ENCODE measurements at regions of chr21 and their contacts with region 1.

Region 1: DNA sequence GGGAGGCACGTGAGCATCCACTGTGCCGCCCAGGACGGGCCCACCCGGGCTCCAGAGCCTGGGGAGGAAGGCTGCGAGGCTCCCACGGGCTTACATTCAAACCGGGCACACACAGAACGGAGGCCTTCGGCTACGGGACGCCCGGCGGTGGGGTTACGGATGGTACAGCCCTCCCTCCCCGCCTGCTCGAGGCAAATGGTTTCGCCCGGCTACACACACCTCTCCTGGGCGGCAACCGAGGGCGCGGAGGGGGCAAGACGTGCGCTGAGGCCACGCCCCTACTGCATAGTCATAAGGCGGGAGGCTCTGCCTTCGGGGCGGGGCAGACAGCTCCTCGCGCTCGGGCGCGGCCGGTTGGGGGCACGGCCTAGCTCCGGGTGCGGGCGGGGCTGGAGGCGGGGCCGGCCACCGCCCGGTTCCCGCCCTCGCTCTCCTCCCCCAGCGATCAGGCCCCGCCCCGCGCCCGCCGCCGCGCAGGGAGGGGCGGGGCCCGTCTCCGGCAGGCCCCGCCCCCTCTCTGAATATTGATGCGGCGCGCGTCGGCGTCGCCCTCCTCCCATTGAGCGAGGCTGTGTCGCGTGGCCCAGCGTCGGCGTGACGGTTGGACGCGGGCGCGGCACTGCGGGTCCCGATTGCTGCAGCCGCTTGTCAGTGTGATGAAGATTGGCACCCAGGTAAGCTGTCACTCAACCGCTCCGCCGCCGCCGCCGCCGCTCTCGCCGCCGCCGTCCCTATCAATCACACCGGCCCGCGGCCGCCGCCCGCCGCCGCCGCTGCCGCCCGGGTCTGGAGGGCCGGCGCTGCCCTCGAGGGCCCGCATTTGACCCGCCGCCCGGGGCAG is at the start of gene PKNOX1:
- DNase-seq: peak; percentile 97 to 99
- ATAC-seq: peak; percentile 88
- H3K4me3 ChIP-seq: peak within 1 kb of the TSS; percentile 72 to 89 (median 86)
- H3K27ac ChIP-seq: peak within 1 kb of the TSS; percentile 97 to 100 (median 99)
- H3K4me1 ChIP-seq: peaks cover 21 to 24% of the 10 kb centered on the region in 2 donors
- H3K27me3 ChIP-seq: no peaks in the 10 kb centered on the region
- CTCF ChIP-seq: peak in 1 of 5 experiments; percentile 22
- POLR2A ChIP-seq: peak; percentile 80 to 83
- total RNA-seq, gene PKNOX1: 5.3 to 18.0 (median 7.6) TPM

Region 2: GRCh38 chr21:42878993-42879787 is 95.0 kb before region 1 on chr21 and contains the start of gene WDR4:
- in situ Hi-C with region 1: no loop called
- intact Hi-C with region 1: loop called (anchors 1 kb)
- DNase-seq: peak; percentile 95 to 97
- ATAC-seq: peak; percentile 97 to 99
- H3K4me3 ChIP-seq: peak within 1 kb of the TSS; percentile 86 to 94 (median 90)
- H3K27ac ChIP-seq: peak within 1 kb of the TSS; percentile 81 to 97 (median 90)
- H3K4me1 ChIP-seq: peaks cover 17% of the 10 kb centered on the region in 2 donors
- H3K27me3 ChIP-seq: no peaks in the 10 kb centered on the region
- CTCF ChIP-seq: no peak
- POLR2A ChIP-seq: peak; percentile 61 to 62
- total RNA-seq, gene WDR4: 1.9 to 13.3 (median 4.4) TPM

Region 3: DNA sequence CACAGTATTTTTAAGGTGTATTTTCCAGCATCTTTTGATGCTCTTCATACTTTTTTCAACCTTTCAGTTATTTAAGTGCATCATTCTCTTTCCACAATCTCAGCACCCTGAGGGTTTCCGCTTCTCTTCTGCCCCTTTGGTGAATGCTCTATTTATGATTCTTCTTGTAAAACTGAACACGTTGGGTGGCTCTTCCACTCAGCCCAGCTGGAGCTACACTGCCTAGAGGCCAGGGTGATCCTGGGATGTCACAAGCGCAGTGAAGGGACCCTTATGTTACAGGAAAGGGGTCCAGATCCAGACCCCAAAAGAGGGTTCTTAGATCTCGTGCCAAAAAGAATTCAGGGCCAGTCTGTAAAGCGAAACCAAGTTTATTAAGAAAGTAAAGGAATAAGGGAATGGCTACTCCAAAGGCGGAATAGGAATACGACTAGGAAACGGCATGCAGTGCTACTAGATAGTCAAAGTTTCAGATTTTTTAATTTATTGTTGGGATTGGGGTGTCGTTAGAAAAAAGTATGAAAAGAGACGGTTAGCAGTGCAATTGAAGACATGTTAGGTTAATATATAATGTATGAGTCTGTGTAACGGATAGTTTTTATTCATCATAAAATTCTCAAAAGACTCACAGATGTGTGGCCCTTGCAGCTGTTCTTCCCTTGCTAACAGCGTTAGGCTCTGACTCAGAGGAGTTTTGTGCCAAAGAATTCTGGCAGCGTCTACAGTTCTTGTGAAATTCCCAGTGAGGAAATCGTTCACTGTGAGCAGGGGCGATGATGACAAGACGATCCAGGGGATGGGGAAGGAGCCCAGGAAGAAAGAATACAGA is 34.4 kb before region 1 on chr21:
- in situ Hi-C with region 1: no loop called
- intact Hi-C with region 1: loop called (anchors 2 kb)
- DNase-seq: peak; percentile 78 to 90
- ATAC-seq: peak; percentile 100
- H3K4me3 ChIP-seq: peak overlapping the region in 3 of 4 donors; percentile 1 to 22 (median 21)
- H3K27ac ChIP-seq: peak overlapping the region; percentile 52 to 64 (median 56)
- H3K4me1 ChIP-seq: peaks cover 11 to 14% of the 10 kb centered on the region in 2 donors
- H3K27me3 ChIP-seq: no peaks in the 10 kb centered on the region
- CTCF ChIP-seq: no peak
- POLR2A ChIP-seq: no peak

Region 4: DNA sequence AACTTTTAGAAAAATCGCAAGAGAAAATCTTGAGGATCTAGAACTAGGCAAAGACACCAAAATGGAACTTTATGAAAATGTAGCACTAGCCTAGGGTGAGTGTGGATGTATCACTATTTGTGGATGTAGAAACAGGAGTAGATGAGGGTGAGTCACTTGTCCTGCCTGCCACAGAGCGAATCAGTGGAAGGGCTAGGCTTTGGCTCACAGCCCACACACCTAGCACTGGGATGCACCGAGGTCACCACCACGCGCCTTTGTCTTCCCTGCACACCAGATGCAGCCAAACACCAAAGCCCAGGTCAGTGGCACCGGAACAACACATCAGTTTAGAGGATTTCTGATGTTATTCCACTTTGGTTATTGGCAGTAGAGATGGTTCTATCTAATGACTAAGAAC is 38.4 kb after region 1 on chr21:
- in situ Hi-C with region 1: no loop called
- intact Hi-C with region 1: no loop called
- DNase-seq: no peak
- ATAC-seq: no peak
- H3K4me3 ChIP-seq: no peak overlapping the region
- H3K27ac ChIP-seq: no peak overlapping the region
- H3K4me1 ChIP-seq: no peaks in the 10 kb centered on the region
- H3K27me3 ChIP-seq: no peaks in the 10 kb centered on the region
- CTCF ChIP-seq: no peak
- POLR2A ChIP-seq: no peak

Region 5: GRCh38 chr21:43775795-43776430 is 801.7 kb after region 1 on chr21 and contains the start of gene CSTB:
- in situ Hi-C with region 1: no loop called
- intact Hi-C with region 1: loop called (anchors 5 kb)
- DNase-seq: peak; percentile 69 to 71
- ATAC-seq: peak; percentile 91
- H3K4me3 ChIP-seq: peak within 1 kb of the TSS; percentile 76 to 99 (median 91)
- H3K27ac ChIP-seq: peak within 1 kb of the TSS; percentile 75 to 94 (median 86)
- H3K4me1 ChIP-seq: peaks cover 14 to 15% of the 10 kb centered on the region in 2 donors
- H3K27me3 ChIP-seq: no peaks in the 10 kb centered on the region
- CTCF ChIP-seq: no peak
- POLR2A ChIP-seq: peak; percentile 61 to 70
- total RNA-seq, gene CSTB: 1.3 to 5.9 (median 5.2) TPM

Measured in gastrocnemius medialis (tissue), 4 donors.